Dendritic cell treated with granulocyte-macrophage colony-stimulating factor and Interleukin-4, amounts not matched to agents 40 ng/mL and 50 ng/mL, for 4 days (primary cell): ENCODE measurements at regions of chr3 and their contacts with region 1.

Region 1: DNA sequence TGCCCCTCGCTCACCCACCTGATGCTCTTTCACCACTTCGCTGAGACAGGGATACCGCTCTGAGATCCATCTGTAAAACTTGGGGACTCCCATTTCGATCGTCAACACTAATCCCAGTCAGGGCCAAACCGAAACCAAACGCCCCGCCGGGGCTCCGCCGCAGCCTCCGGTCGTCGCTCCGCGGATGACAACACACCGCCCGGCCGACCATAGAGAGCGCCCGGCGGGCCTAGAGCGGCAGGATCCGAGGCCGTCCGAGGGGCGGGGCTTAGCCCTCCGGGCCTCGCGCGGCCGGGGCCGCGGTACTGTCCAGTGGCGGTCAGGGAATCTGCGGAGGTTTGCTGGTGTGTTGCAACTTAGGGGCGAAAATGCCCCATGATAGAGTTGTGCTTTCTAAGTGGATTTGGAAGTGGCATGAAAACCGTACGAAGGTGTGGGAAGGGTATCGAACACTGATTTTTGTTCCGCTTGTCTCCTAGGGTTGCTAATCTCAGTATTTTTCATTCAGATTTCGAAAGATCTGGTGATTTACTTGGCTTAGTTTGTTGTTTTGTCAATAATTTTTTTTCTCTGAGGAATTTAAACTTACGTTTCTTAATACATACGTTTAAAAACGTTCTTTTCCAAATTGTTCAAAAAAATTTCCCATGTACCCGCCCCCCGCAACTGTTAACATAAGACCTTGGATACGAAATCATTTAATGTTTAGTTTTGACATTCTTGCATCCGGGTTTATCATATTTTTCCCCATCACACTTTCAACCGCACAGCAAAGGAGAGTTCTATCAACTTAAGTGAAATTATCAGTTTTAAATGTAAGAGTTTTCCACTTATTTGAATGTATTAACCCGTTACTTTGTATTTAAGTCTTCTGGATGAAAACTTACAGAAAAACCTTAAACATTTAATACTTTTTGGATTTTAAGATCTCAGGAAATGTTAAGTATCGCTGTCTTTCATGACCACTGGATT is at the start of gene XRN1:
- H3K4me3 Mint-ChIP-seq: peak within 1 kb of the TSS; percentile 97
- H3K27ac Mint-ChIP-seq: peak within 1 kb of the TSS; percentile 99
- H3K4me1 Mint-ChIP-seq: peaks cover 31% of the 10 kb centered on the region
- H3K27me3 Mint-ChIP-seq: no peaks in the 10 kb centered on the region

Region 2: GRCh38 chr3:143001369-143002082 is 553.4 kb after region 1 on chr3 and contains the start of gene U2SURP:
- intact Hi-C with region 1: loop called (anchors 2 kb)
- H3K4me3 Mint-ChIP-seq: peak within 1 kb of the TSS; percentile 81
- H3K27ac Mint-ChIP-seq: peak within 1 kb of the TSS; percentile 97
- H3K4me1 Mint-ChIP-seq: peaks cover 32% of the 10 kb centered on the region
- H3K27me3 Mint-ChIP-seq: no peaks in the 10 kb centered on the region